KBM-7 (cell line): ENCODE measurements at regions of chr12 and their contacts with region 1.

Region 1: DNA sequence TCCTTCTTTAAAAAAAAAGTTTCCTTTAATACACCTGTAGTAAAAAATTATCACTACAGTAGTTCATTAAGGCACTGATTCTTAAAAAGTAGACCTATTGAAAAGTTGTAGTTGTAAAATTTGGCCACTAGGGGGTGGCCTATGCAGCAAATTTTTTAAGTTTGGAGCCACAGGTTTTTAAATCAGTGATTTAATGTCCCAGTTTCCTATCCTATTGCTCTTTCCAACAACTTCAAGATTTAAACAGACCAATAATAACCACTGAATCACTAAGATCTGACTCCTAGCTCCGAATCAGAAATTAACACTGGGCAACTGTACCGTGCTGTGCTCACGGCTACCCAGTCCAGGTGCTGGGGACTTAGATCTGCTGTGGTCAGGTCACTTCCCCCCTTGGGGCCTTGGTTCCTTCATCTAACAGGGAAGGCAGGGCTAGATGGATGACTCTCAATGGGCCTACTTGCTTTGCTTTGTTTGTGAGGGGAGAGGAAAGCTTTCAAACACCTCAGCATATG is 279.3 kb downstream of the MED13L start:
- DNase-seq: peak; percentile 69

Region 2: GRCh38 chr12:115667116-115667515 is 331.1 kb before region 1 on chr12:
- in situ Hi-C with region 1: no loop called
- DNase-seq: no peak

Region 3: GRCh38 chr12:116043659-116044535 is 45.7 kb after region 1 on chr12:
- in situ Hi-C with region 1: no loop called
- DNase-seq: no peak

Region 4: DNA sequence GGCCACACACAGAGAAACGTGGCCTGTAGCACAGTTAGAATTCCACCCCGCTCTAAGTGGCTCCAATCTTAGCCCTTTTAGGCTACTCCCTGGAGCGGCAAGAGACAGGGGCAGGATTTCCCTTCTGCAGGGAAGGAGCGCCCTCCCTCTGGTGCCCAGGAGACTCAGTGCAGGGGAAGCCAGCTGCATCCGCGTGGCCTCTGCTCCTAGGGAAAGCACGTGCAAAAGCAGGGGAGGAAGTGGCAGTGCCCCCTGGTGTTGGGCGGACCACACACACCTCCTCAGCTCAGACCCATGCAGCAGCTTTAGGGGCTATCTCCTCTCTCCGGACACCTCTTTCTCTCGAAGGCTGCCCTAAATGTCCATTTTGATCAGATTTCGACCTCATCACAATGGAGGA is 689.7 kb after region 1 on chr12:
- in situ Hi-C with region 1: loop called (anchors 25 kb)
- DNase-seq: peak; percentile 88